GM12878 (cell line): ENCODE measurements at regions of chr6 and their contacts with region 1.

Region 1: DNA sequence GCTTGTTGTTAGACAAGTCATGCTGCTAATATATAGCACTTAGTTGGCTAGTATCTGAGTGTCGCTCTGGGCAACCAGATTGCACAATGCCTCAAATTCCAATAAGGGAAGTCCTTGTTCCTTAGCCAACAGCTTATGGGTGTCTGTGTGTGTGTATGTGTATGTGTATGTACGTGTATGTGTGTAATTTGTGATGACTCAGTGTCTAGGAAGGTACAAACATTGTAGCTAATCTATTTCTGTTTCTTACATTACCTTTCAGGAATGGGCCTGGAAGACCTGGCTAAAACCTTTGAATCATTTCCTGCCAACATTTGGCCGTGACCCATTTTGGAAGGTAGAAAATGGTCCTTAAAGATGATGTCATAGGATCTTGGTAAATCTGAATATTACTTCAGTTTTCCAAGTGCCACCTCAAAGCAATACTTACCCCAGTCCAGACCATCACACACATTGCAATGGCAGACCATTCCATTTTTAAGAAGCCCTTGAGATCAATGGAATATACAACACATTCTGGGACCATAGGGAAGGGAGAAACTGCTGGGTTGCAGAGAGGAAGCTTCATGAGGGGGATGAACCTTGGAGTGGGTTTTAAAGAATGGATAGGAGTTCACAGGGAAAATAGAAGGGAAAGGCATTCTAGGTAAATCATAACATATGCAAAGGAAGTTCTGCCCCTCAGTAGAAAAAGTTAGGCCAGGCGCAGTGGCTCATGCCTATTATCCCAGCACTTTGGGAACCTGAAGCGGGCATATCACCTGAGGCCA is 25.1 kb downstream of the NEDD9 start:
- DNase-seq: no peak
- ATAC-seq: no peak
- H3K4me3 ChIP-seq: no peak overlapping the region
- H3K27ac ChIP-seq: no peak overlapping the region
- H3K4me1 ChIP-seq: 0 out of 2 replicates have a peak, but pooled peaks cover 3% of the 10 kb centered on the region
- H3K27me3 ChIP-seq: no peaks in the 10 kb centered on the region
- CTCF ChIP-seq: no peak
- EP300 ChIP-seq: no peak
- POLR2A ChIP-seq: no peak
- RAD21 ChIP-seq: no peak

Region 2: DNA sequence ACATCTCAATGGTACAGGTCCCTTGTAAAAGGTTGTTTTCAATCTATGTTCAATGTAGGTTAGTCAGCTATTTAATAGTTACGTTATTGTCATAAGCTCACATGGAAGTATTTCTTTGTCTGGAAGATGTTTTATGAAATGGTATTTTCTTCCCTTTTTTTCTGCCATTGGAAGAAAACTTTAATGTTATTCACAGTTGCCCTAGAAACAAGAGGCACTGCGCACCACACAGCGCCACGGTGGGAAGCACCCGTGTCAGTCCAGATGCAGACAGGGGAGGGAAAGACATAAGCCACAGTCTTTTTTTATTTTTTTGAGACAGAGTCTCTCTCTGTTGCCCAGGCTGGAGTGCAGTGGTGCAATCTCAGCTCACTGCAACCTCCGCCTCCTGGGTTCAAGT is 604.2 kb before region 1 on chr6:
- CTCF ChIA-PET with region 1: no interaction called
- POLR2A ChIA-PET with region 1: no interaction called
- RAD21 ChIA-PET with region 1: no interaction called
- SMC1A ChIA-PET with region 1: no interaction called
- in situ Hi-C with region 1: no loop called
- intact Hi-C with region 1: no loop called
- DNase-seq: no peak
- ATAC-seq: no peak
- H3K4me3 ChIP-seq: no peak overlapping the region
- H3K27ac ChIP-seq: no peak overlapping the region
- H3K4me1 ChIP-seq: no peaks in the 10 kb centered on the region
- H3K27me3 ChIP-seq: no peaks in the 10 kb centered on the region
- CTCF ChIP-seq: no peak
- EP300 ChIP-seq: no peak
- POLR2A ChIP-seq: no peak
- RAD21 ChIP-seq: no peak

Region 3: GRCh38 chr6:10779076-10779475 is 428.3 kb before region 1 on chr6:
- CTCF ChIA-PET with region 1: no interaction called
- POLR2A ChIA-PET with region 1: no interaction called
- RAD21 ChIA-PET with region 1: no interaction called
- SMC1A ChIA-PET with region 1: no interaction called
- in situ Hi-C with region 1: no loop called
- intact Hi-C with region 1: no loop called
- DNase-seq: no peak
- ATAC-seq: no peak
- H3K4me3 ChIP-seq: no peak overlapping the region
- H3K27ac ChIP-seq: no peak overlapping the region
- H3K4me1 ChIP-seq: no peaks in the 10 kb centered on the region
- H3K27me3 ChIP-seq: no peaks in the 10 kb centered on the region
- CTCF ChIP-seq: no peak
- EP300 ChIP-seq: no peak
- POLR2A ChIP-seq: no peak
- RAD21 ChIP-seq: no peak

Region 4: DNA sequence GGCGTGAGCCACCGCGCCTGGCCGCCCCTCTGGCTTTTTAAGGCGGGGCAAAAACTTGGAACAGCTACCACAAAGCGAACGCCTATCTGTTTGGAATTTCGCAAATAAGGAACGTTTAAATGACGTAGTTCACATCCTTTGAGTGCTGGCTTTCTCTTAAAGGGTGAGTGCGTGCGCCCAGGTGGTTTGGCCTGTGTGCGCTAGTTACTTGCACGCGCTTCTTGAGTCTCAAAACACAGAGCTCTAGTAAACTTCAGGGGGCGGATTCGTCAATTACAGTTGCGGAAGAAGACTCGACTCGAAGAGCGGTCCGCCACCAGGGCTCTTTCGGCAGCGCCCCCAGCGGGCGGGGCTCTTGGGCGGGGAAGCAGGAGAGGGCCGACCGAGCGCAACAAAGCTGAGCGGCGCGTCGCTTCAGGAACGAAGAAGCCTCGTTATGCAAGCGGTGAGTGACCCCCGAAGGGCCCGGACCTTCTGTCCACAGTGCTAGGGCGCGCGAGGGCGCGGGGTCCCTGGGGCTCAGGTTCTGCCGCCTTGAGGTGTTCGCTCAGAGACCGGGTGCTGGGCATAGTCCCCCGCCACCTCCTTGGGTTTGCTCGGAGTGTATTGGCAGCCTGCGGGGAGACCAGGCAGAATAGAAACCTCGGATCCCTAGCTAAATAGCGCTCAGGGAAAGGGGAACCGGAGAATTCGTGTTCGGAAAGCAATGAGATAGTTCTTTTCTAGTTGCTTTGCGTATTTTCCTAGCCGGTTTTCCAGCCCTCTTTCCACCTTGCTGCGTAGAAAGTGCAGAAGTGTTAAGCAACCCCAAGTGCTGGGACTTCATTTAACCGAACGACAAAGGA is 320.5 kb before region 1 on chr6 and contains the start of gene SYCP2L:
- CTCF ChIA-PET with region 1: no interaction called
- POLR2A ChIA-PET with region 1: no interaction called
- RAD21 ChIA-PET with region 1: no interaction called
- SMC1A ChIA-PET with region 1: no interaction called
- in situ Hi-C with region 1: no loop called
- intact Hi-C with region 1: no loop called
- DNase-seq: no peak
- ATAC-seq: no peak; the same call in 2 of the 3 replicates
- H3K4me3 ChIP-seq: peak within 1 kb of the TSS; percentile 58; the same call in 1 of the 2 replicates
- H3K27ac ChIP-seq: no peak within 1 kb of the TSS
- H3K4me1 ChIP-seq: peaks cover 9% of the 10 kb centered on the region
- H3K27me3 ChIP-seq: peaks cover 8 to 11% of the 10 kb centered on the region in 2 experiments
- CTCF ChIP-seq: peak in 2 of 3 experiments; percentile 8; a peak in 1 of 6 replicates
- EP300 ChIP-seq: no peak
- POLR2A ChIP-seq: no peak
- RAD21 ChIP-seq: no peak
- polyA plus RNA-seq, gene SYCP2L: not detected

Region 5: GRCh38 chr6:11224252-11224965 is 17.0 kb after region 1 on chr6:
- CTCF ChIA-PET with region 1: interaction called, 6 read pairs
- POLR2A ChIA-PET with region 1: interaction called, 4 read pairs
- RAD21 ChIA-PET with region 1: no interaction called
- SMC1A ChIA-PET with region 1: interaction called, 62 read pairs
- in situ Hi-C with region 1: no loop called
- intact Hi-C with region 1: no loop called
- DNase-seq: peak; percentile 43
- ATAC-seq: peak; percentile 82
- H3K4me3 ChIP-seq: no peak overlapping the region
- H3K27ac ChIP-seq: 0 out of 2 replicates have a peak overlapping the region, but pooled peaks have one; percentile 25
- H3K4me1 ChIP-seq: peaks cover 21% of the 10 kb centered on the region
- H3K27me3 ChIP-seq: no peaks in the 10 kb centered on the region
- CTCF ChIP-seq: no peak
- EP300 ChIP-seq: no peak
- POLR2A ChIP-seq: no peak
- RAD21 ChIP-seq: 0 out of 2 replicates have a peak, but pooled peaks have one; percentile 6